ENCODE measurements at regions of chr2 and their contacts with region 1.

Region 1: DNA sequence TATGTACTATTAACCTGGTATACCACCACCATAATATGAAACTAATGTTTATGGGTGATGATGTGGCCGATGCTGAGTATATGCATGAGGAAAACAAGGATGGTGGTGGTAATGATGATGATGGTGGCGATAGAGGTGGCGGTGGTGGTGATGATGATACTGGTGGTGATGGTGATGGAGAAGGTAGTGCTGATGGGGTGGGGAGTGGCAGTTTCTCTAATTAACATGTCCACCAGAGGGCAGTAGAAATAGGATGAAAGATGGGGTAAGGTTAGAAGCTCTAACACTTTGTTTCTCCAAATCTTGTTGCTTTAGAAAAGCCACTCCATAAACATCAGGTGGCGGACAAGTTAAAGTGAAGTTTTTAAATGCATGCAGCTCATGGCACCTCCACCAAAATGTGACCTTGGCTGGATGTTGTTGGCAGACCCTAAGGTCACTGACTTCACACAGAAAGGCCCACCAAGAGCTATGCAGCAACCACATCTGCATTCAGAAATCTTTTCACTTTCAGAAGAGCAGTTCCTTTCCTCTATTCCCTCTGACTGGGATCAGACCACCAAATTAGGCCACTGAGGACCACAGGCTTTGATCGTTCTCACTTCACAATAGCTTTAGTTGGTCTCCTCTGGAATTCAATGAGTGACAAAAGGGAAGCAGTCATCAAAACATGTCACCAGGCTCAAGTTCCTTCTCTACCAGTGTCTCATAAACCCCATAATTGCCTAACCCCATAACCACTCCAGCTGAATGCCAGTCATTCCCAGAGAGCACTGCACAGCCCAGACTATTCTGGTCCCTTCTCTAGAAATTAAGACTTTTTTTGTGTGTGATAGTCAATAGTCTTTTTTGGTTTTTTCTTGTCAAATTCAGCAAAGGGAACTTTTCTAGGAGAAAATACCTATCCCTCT is 7.5 kb upstream of the BCL11A start:
- DNase-seq: no peak
- H3K4me3 Mint-ChIP-seq: no peak overlapping the region
- H3K27ac Mint-ChIP-seq: no peak overlapping the region
- H3K4me1 Mint-ChIP-seq: peaks cover 11% of the 10 kb centered on the region
- H3K27me3 Mint-ChIP-seq: peaks cover 68% of the 10 kb centered on the region

Region 2: GRCh38 chr2:60581433-60582282 is 20.7 kb after region 1 on chr2:
- intact Hi-C with region 1: loop called (anchors 2 kb)
- DNase-seq: peak; percentile 49
- H3K4me3 Mint-ChIP-seq: no peak overlapping the region
- H3K27ac Mint-ChIP-seq: no peak overlapping the region
- H3K4me1 Mint-ChIP-seq: no peaks in the 10 kb centered on the region
- H3K27me3 Mint-ChIP-seq: peaks cover 30% of the 10 kb centered on the region

Region 3: GRCh38 chr2:60679036-60679780 is 118.2 kb after region 1 on chr2:
- intact Hi-C with region 1: no loop called
- DNase-seq: no peak
- H3K4me3 Mint-ChIP-seq: no peak overlapping the region
- H3K27ac Mint-ChIP-seq: no peak overlapping the region
- H3K4me1 Mint-ChIP-seq: peaks cover 2% of the 10 kb centered on the region
- H3K27me3 Mint-ChIP-seq: peaks cover 2% of the 10 kb centered on the region